ENCODE measurements at regions of chr16 and their contacts with region 1.

Region 1: DNA sequence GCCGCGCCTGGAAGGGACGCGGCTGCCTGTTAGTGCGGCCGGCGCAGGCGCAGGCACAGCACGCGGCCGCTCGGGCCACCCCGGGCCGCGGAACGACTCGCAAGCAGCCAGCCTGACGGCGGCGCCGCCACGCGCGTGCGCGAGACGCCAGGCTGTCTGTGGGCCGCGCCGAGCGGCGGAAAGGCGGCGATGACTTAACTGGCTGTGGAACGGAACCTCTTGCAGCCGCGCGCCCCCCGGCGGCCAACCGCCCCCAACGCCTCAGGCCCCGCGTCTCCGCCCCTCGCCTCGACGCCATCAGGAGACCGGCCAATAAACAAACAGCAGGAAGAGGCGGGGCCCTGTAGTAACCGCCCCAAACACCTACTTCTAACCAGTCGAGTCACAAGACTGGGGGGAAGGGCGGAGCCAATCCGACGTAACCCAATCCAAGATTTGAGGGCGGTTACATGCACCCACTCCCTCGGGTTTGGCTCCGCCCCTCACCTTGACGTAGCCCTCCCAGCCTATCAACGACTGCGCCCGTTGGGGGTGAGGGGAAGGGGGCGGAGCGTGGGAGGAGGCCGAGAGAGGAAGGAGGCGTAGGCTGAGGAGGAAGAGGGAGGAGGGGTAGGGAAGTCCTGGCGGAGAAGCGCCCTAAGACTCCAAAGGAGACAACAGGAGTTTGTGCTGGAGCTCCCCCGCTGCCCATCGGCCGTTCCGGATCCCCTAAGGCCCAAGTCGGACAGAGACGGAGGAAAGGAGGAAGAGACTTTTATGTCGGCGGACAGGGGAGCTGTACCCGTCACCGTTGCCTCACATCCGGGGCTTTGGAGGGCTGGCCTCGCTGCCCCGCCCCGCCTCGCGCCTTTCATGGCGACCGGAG is at the start of gene FBRS:
- DNase-seq: peak; percentile 98 to 100 (median 100)
- ATAC-seq: peak; percentile 84
- H3K4me3 ChIP-seq: peak within 1 kb of the TSS; percentile 83
- H3K4me3 Mint-ChIP-seq: peak within 1 kb of the TSS; percentile 81 to 99 (median 96)
- H3K27ac ChIP-seq: peak within 1 kb of the TSS; percentile 94
- H3K27ac Mint-ChIP-seq: peak within 1 kb of the TSS; percentile 99 to 100 (median 100)
- H3K4me1 ChIP-seq: peaks cover 38 to 42% of the 10 kb centered on the region in 2 donors
- H3K4me1 Mint-ChIP-seq: peaks cover 19 to 50% (median 40%) of the 10 kb centered on the region in 7 donors
- H3K27me3 ChIP-seq: no peaks in the 10 kb centered on the region
- H3K27me3 Mint-ChIP-seq: no peaks in the 10 kb centered on the region
- total RNA-seq, gene FBRS: 143 to 174 (median 164) TPM

Region 2: GRCh38 chr16:29820271-29820701 is 837.8 kb before region 1 on chr16 and contains the start of gene MVP:
- CTCF ChIA-PET with region 1: no interaction called
- POLR2A ChIA-PET with region 1: no interaction called
- intact Hi-C with region 1: no loop called
- DNase-seq: peak in 8 of 9 donors; percentile 33 to 68 (median 50)
- ATAC-seq: no peak
- H3K4me3 ChIP-seq: peak within 1 kb of the TSS; percentile 95
- H3K4me3 Mint-ChIP-seq: peak within 1 kb of the TSS; percentile 86 to 99 (median 97)
- H3K27ac ChIP-seq: peak within 1 kb of the TSS; percentile 84
- H3K27ac Mint-ChIP-seq: peak within 1 kb of the TSS; percentile 89 to 99 (median 96)
- H3K4me1 ChIP-seq: peaks cover 61 to 66% of the 10 kb centered on the region in 2 donors
- H3K4me1 Mint-ChIP-seq: peaks cover 44 to 90% (median 65%) of the 10 kb centered on the region in 7 donors
- H3K27me3 ChIP-seq: no peaks in the 10 kb centered on the region
- H3K27me3 Mint-ChIP-seq: peaks cover 0 to 4% (median 0%) of the 10 kb centered on the region in 5 donors
- total RNA-seq, gene MVP: 130 to 221 (median 150) TPM

Region 3: GRCh38 chr16:29995911-29996772 is 662.0 kb before region 1 on chr16 and contains the start of gene INO80E:
- CTCF ChIA-PET with region 1: no interaction called
- POLR2A ChIA-PET with region 1: no interaction called
- intact Hi-C with region 1: loop called in 1 of 2 experiments (anchors 1 kb)
- DNase-seq: peak; percentile 94 to 99 (median 98)
- ATAC-seq: peak; percentile 99
- H3K4me3 ChIP-seq: peak within 1 kb of the TSS; percentile 100
- H3K4me3 Mint-ChIP-seq: peak within 1 kb of the TSS; percentile 86 to 99 (median 98)
- H3K27ac ChIP-seq: peak within 1 kb of the TSS; percentile 99
- H3K27ac Mint-ChIP-seq: peak within 1 kb of the TSS; percentile 93 to 99 (median 97)
- H3K4me1 ChIP-seq: peaks cover 16 to 18% of the 10 kb centered on the region in 2 donors
- H3K4me1 Mint-ChIP-seq: peaks cover 24 to 53% (median 38%) of the 10 kb centered on the region in 7 donors
- H3K27me3 ChIP-seq: no peaks in the 10 kb centered on the region
- H3K27me3 Mint-ChIP-seq: no peaks in the 10 kb centered on the region
- total RNA-seq, gene INO80E: 71.7 to 141 (median 95.8) TPM

Region 4: GRCh38 chr16:30378236-30379204 is 279.6 kb before region 1 on chr16:
- CTCF ChIA-PET with region 1: no interaction called
- POLR2A ChIA-PET with region 1: interaction called, 3 read pairs
- intact Hi-C with region 1: loop called (anchors 1 kb)
- DNase-seq: peak; percentile 97 to 99 (median 99)
- ATAC-seq: peak; percentile 91
- H3K4me3 ChIP-seq: peak overlapping the region; percentile 88
- H3K4me3 Mint-ChIP-seq: peak overlapping the region; percentile 90 to 100 (median 97)
- H3K27ac ChIP-seq: peak overlapping the region; percentile 100
- H3K27ac Mint-ChIP-seq: peak overlapping the region; percentile 98 to 100 (median 100)
- H3K4me1 ChIP-seq: peaks cover 54 to 56% of the 10 kb centered on the region in 2 donors
- H3K4me1 Mint-ChIP-seq: peaks cover 32 to 61% (median 49%) of the 10 kb centered on the region in 7 donors
- H3K27me3 ChIP-seq: no peaks in the 10 kb centered on the region
- H3K27me3 Mint-ChIP-seq: no peaks in the 10 kb centered on the region

Region 5: DNA sequence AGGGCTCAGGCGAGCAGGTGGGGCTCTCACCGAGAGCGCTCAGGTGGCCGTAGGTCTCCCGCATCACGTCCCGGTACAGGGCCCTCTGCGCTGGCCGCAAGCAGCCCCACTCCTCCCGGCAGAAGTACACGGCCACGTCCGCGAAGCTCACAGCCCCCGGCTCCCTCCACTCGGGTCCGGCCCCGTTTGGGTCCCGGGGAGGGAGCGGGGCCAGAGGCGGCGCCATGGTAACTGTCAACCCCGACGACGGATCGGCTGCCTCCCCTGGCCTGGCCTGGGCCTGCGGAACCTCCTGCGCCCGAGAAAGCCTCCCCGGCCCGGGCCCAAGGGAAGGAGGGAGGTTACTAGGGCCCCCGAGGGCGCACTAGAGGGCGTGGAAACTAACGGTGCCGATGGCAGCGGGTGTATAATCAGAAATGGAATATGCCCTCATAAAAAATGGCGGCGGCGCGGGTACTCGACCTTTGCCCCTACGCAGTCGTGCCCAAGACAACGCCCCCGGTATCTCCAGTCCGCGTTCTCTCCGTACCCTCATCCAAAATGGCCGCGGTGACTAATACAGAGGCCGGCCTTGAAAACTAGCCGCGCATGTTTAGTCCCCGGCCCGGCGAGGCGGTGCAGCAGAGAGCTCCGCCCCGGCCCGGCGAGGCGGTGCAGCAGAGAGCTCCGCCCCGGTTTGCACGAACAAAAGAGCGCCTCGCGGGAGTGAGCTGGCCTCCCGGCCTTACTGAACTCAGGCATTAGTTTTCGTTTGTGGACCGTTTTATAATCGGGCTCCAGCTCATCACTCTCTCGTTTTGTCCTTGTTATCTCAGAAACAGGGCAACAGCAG is 99.9 kb before region 1 on chr16 and contains the start of gene ZNF764:
- CTCF ChIA-PET with region 1: interaction called, 3 read pairs
- POLR2A ChIA-PET with region 1: interaction called, 16 read pairs
- intact Hi-C with region 1: loop called in 1 of 2 experiments (anchors 1 kb)
- DNase-seq: peak; percentile 79 to 95 (median 91)
- ATAC-seq: peak; percentile 95
- H3K4me3 ChIP-seq: peak within 1 kb of the TSS; percentile 92
- H3K4me3 Mint-ChIP-seq: peak within 1 kb of the TSS; percentile 83 to 92 (median 90)
- H3K27ac ChIP-seq: peak within 1 kb of the TSS; percentile 99
- H3K27ac Mint-ChIP-seq: peak within 1 kb of the TSS; percentile 87 to 94 (median 92)
- H3K4me1 ChIP-seq: peaks cover 12 to 15% of the 10 kb centered on the region in 2 donors
- H3K4me1 Mint-ChIP-seq: peaks cover 33 to 58% (median 43%) of the 10 kb centered on the region in 7 donors
- H3K27me3 ChIP-seq: no peaks in the 10 kb centered on the region
- H3K27me3 Mint-ChIP-seq: no peaks in the 10 kb centered on the region
- total RNA-seq, gene ZNF764: 11.9 to 20.9 (median 19.3) TPM

Region 6: GRCh38 chr16:30644334-30644830 is 13.7 kb before region 1 on chr16:
- CTCF ChIA-PET with region 1: no interaction called
- POLR2A ChIA-PET with region 1: interaction called, 10 read pairs
- intact Hi-C with region 1: no loop called
- DNase-seq: no peak
- ATAC-seq: no peak
- H3K4me3 ChIP-seq: no peak overlapping the region
- H3K4me3 Mint-ChIP-seq: no peak overlapping the region
- H3K27ac ChIP-seq: no peak overlapping the region
- H3K27ac Mint-ChIP-seq: no peak overlapping the region
- H3K4me1 ChIP-seq: peaks cover under 1 to 1% of the 10 kb centered on the region in 2 donors
- H3K4me1 Mint-ChIP-seq: peaks cover 0 to 4% (median 0%) of the 10 kb centered on the region in 7 donors
- H3K27me3 ChIP-seq: no peaks in the 10 kb centered on the region
- H3K27me3 Mint-ChIP-seq: peaks cover 0 to 4% (median 0%) of the 10 kb centered on the region in 5 donors

Region 7: GRCh38 chr16:30813821-30814189 is 155.7 kb after region 1 on chr16:
- CTCF ChIA-PET with region 1: no interaction called
- POLR2A ChIA-PET with region 1: interaction called, 4 read pairs
- intact Hi-C with region 1: loop called in 1 of 2 experiments (anchors 5 kb)
- DNase-seq: no peak
- ATAC-seq: no peak
- H3K4me3 ChIP-seq: peak overlapping the region; percentile 70
- H3K4me3 Mint-ChIP-seq: peak overlapping the region; percentile 84 to 92 (median 86)
- H3K27ac ChIP-seq: peak overlapping the region; percentile 73
- H3K27ac Mint-ChIP-seq: peak overlapping the region; percentile 61 to 98 (median 88)
- H3K4me1 ChIP-seq: peaks cover 7% of the 10 kb centered on the region in 2 donors
- H3K4me1 Mint-ChIP-seq: peaks cover 5 to 15% (median 13%) of the 10 kb centered on the region in 7 donors
- H3K27me3 ChIP-seq: no peaks in the 10 kb centered on the region
- H3K27me3 Mint-ChIP-seq: peaks cover 0 to 3% (median 0%) of the 10 kb centered on the region in 5 donors

Region 8: GRCh38 chr16:31128711-31129567 is 470.8 kb after region 1 on chr16:
- CTCF ChIA-PET with region 1: no interaction called
- POLR2A ChIA-PET with region 1: no interaction called
- intact Hi-C with region 1: no loop called
- DNase-seq: no peak
- ATAC-seq: peak; percentile 91
- H3K4me3 ChIP-seq: no peak overlapping the region
- H3K4me3 Mint-ChIP-seq: peak overlapping the region in 3 of 10 donors; percentile 14 to 27 (median 18)
- H3K27ac ChIP-seq: peak overlapping the region; percentile 58
- H3K27ac Mint-ChIP-seq: peak overlapping the region in 6 of 9 donors; percentile 12 to 85 (median 60)
- H3K4me1 ChIP-seq: no peaks in the 10 kb centered on the region
- H3K4me1 Mint-ChIP-seq: peaks cover 3 to 22% (median 11%) of the 10 kb centered on the region in 7 donors
- H3K27me3 ChIP-seq: no peaks in the 10 kb centered on the region
- H3K27me3 Mint-ChIP-seq: no peaks in the 10 kb centered on the region